Heart right ventricle (tissue), 16 donors: ENCODE measurements at regions of chr6 and their contacts with region 1.

Region 1: GRCh38 chr6:37102279-37103168 is 67.4 kb upstream of the PIM1 start:
- DNase-seq: peak; percentile 87 to 89
- ATAC-seq: peak; percentile 91 to 97 (median 94)
- H3K4me3 ChIP-seq: peak overlapping the region; percentile 14 to 60 (median 48)
- H3K27ac ChIP-seq: peak overlapping the region; percentile 51 to 94 (median 86)
- H3K4me1 ChIP-seq: peaks cover 7 to 39% (median 21%) of the 10 kb centered on the region in 9 donors
- H3K27me3 ChIP-seq: no peaks in the 10 kb centered on the region
- CTCF ChIP-seq: no peak

Region 2: DNA sequence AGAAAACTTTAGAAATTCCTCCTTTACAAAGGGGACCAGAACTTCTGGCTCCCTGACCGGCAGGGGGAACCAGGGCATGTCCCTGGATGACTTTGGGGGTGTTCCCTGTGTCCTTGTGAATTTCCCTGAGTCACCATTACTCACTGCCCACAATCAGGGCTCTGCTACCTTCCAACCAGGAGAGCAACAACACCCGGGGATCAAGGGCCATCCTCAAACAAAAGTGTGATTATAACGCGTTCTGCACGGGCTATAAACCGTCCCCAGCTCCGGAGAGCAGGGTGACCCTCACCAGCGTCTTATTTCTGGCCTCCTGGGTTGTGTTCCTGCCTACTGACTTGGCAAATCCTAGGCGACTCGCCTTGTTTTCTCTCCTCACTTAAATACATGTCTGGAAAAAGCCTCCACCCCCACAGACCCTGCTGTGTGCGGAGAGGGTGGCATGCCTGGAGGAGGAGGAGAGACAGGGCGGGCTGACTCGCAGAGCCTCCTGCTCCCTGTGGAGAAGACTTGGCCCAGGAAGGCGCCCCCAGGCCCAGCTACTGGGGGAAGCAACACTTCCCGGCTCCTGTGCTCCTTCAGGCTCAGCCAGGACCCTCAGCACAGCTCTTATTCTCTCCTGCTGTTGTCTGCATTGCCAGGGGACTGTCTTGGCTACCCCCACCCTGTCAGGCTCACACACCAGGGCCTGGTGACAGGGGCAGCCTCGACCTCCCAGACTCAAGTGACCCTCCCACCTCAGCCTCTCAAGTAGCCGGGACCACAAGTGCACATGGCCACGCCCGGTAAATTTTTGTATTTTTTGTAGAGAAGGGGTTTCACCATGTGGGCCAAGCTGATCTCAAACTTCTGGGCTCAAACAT is 42.9 kb before region 1 on chr6:
- intact Hi-C with region 1: loop called in 1 of 10 experiments (anchors 5 kb)
- DNase-seq: peak; percentile 46 to 52
- ATAC-seq: peak; percentile 61 to 89 (median 68)
- H3K4me3 ChIP-seq: no peak overlapping the region
- H3K27ac ChIP-seq: peak overlapping the region in 7 of 10 donors; percentile 19 to 79 (median 49)
- H3K4me1 ChIP-seq: peaks cover 0 to 31% (median 5%) of the 10 kb centered on the region in 9 donors
- H3K27me3 ChIP-seq: no peaks in the 10 kb centered on the region
- CTCF ChIP-seq: peak in 7 of 9 donors; percentile 12 to 54 (median 42)

Region 3: GRCh38 chr6:37131104-37131959 is 28.8 kb after region 1 on chr6:
- intact Hi-C with region 1: loop called in 2 of 10 experiments (anchors 2 kb)
- DNase-seq: peak; percentile 51 to 82
- ATAC-seq: peak; percentile 82 to 93 (median 88)
- H3K4me3 ChIP-seq: peak overlapping the region in 1 of 10 donors; percentile 3
- H3K27ac ChIP-seq: peak overlapping the region; percentile 56 to 89 (median 72)
- H3K4me1 ChIP-seq: peaks cover 0 to 60% (median 24%) of the 10 kb centered on the region in 9 donors
- H3K27me3 ChIP-seq: no peaks in the 10 kb centered on the region
- CTCF ChIP-seq: peak in 1 of 9 donors; percentile 8

Region 4: DNA sequence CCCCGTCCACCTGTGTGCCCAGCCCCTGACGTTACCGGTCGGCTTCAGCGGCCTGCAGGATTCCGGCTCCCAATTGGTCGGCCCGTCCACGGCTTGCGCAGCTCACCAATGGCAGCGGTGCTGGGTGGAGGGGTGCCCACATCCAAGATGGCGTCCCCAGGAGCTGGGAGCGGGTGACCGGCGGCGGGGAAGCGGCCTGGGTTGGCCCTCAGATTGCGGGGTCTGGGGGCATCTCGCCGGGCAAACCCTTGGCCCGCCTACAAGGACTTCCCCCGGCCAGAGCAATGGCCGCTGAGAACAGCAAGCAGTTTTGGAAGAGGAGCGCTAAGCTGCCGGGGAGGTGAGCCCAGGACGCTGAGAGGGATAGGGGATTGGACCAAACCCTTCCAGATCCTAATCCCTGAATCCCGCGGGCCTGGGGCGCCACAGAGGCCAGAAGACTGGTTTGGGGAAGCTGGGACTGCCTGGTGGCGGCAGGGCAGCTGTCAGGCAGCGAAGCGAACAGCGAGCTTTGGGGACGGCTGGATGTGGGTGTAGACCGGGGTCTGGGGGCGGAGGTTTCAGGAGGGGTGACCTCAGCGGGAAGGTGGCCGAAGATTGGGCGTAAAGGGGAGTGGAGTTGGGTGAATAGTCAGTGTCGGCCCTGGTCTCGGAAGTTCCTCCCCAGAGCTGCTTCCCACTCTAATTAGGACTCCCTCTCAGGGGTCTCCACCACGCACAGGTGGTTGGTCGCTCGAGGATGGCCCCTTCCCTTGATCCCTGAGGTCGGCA is 155.3 kb after region 1 on chr6 and contains the starts of genes TBC1D22B and TMEM217:
- intact Hi-C with region 1: no loop called
- DNase-seq: peak; percentile 94 to 96
- ATAC-seq: peak; percentile 100
- H3K4me3 ChIP-seq: peak within 1 kb of the TSS; percentile 70 to 98 (median 89)
- H3K27ac ChIP-seq: peak within 1 kb of the TSS; percentile 69 to 98 (median 92)
- H3K4me1 ChIP-seq: peaks cover 0 to 33% (median 24%) of the 10 kb centered on the region in 9 donors
- H3K27me3 ChIP-seq: no peaks in the 10 kb centered on the region
- CTCF ChIP-seq: no peak
- total RNA-seq, gene TBC1D22B: 5.4 to 8.1 (median 6.6) TPM
- total RNA-seq, gene TMEM217: 0.20 to 1.1 (median 0.41) TPM in 8 of 10 donors, not detected in the others